Transverse colon (tissue), 4 donors: ENCODE measurements at regions of chr3 and their contacts with region 1.

Region 1: DNA sequence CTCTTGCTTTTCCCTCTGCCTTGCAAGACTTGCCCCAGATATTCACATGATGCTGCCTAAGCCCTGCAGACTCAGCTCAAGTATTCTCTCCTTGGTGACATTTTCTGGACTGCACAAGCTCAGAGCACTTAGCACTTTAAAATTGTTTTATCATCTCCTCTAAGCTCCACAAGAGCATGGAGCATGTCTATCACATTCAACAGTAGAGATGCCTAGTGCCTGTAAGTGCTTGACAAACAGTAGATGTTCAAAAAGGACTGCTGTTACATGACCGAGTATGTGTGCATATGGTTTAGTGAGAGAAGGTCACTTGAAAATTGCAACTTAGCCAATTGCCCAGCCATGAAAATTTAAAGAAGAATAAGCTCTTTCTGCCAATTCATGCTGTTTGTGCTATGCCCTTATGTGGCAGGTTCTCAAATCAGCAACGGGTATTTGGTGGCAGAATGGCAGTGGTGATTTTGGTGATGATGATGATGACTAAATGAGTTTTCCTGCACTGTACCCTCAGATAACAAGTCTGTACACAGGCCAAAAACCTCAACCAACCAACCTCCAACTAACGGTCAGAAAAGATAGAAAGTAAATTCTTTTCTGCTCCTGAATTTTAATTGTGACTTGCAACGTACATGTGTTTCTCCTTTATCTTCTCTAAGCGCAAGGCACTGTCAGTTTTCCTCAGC is 647.2 kb upstream of the UBE2E2 start:
- DNase-seq: no peak
- H3K4me3 ChIP-seq: no peak overlapping the region
- H3K27ac ChIP-seq: no peak overlapping the region
- H3K4me1 ChIP-seq: no peaks in the 10 kb centered on the region
- H3K27me3 ChIP-seq: no peaks in the 10 kb centered on the region
- CTCF ChIP-seq: no peak
- EP300 ChIP-seq: no peak
- POLR2A ChIP-seq: no peak

Region 2: GRCh38 chr3:22887664-22888291 is 331.9 kb after region 1 on chr3:
- in situ Hi-C with region 1: loop called in 2 of 4 experiments (anchors 10 to 25 kb)
- intact Hi-C with region 1: no loop called
- DNase-seq: peak; percentile 19
- H3K4me3 ChIP-seq: no peak overlapping the region
- H3K27ac ChIP-seq: no peak overlapping the region
- H3K4me1 ChIP-seq: peaks cover 0 to 10% (median 0%) of the 10 kb centered on the region in 4 donors
- H3K27me3 ChIP-seq: no peaks in the 10 kb centered on the region
- CTCF ChIP-seq: peak; percentile 42 to 52 (median 51)
- EP300 ChIP-seq: no peak
- POLR2A ChIP-seq: no peak

Region 3: GRCh38 chr3:22922317-22922716 is 366.4 kb after region 1 on chr3:
- in situ Hi-C with region 1: loop called in 1 of 4 experiments (anchors 25 kb)
- intact Hi-C with region 1: no loop called
- DNase-seq: no peak
- H3K4me3 ChIP-seq: no peak overlapping the region
- H3K27ac ChIP-seq: no peak overlapping the region
- H3K4me1 ChIP-seq: no peaks in the 10 kb centered on the region
- H3K27me3 ChIP-seq: no peaks in the 10 kb centered on the region
- CTCF ChIP-seq: peak in 4 of 5 experiments; percentile 20 to 29 (median 25)
- EP300 ChIP-seq: no peak
- POLR2A ChIP-seq: no peak

Region 4: GRCh38 chr3:22960105-22960984 is 404.5 kb after region 1 on chr3:
- in situ Hi-C with region 1: loop called in 2 of 4 experiments (anchors 25 kb)
- intact Hi-C with region 1: loop called (anchors 5 kb)
- DNase-seq: peak; percentile 32
- H3K4me3 ChIP-seq: no peak overlapping the region
- H3K27ac ChIP-seq: no peak overlapping the region
- H3K4me1 ChIP-seq: peaks cover 0 to 5% (median 0%) of the 10 kb centered on the region in 4 donors
- H3K27me3 ChIP-seq: no peaks in the 10 kb centered on the region
- CTCF ChIP-seq: peak; percentile 62 to 65 (median 63)
- EP300 ChIP-seq: no peak
- POLR2A ChIP-seq: peak; percentile 14